Sigmoid colon (tissue), 7 donors: ENCODE measurements at regions of chr2 and their contacts with region 1.

Region 1: GRCh38 chr2:5691975-5692529 is at the start of gene SOX11:
- DNase-seq: peak; percentile 91
- H3K4me3 ChIP-seq: peak within 1 kb of the TSS; percentile 27 to 52 (median 48)
- H3K27ac ChIP-seq: peak within 1 kb of the TSS; percentile 20 to 84 (median 78)
- H3K4me1 ChIP-seq: peaks cover 0 to 51% (median 35%) of the 10 kb centered on the region in 4 donors
- H3K27me3 ChIP-seq: peaks cover 28 to 82% (median 51%) of the 10 kb centered on the region in 3 donors
- CTCF ChIP-seq: no peak
- EP300 ChIP-seq: no peak
- POLR2A ChIP-seq: no peak
- total RNA-seq, gene SOX11: 2.6 to 3.6 (median 2.9) TPM

Region 2: GRCh38 chr2:5433855-5434254 is 258.2 kb before region 1 on chr2:
- intact Hi-C with region 1: no loop called
- DNase-seq: no peak
- H3K4me3 ChIP-seq: no peak overlapping the region
- H3K27ac ChIP-seq: no peak overlapping the region
- H3K4me1 ChIP-seq: no peaks in the 10 kb centered on the region
- H3K27me3 ChIP-seq: no peaks in the 10 kb centered on the region
- CTCF ChIP-seq: no peak
- EP300 ChIP-seq: no peak
- POLR2A ChIP-seq: no peak

Region 3: DNA sequence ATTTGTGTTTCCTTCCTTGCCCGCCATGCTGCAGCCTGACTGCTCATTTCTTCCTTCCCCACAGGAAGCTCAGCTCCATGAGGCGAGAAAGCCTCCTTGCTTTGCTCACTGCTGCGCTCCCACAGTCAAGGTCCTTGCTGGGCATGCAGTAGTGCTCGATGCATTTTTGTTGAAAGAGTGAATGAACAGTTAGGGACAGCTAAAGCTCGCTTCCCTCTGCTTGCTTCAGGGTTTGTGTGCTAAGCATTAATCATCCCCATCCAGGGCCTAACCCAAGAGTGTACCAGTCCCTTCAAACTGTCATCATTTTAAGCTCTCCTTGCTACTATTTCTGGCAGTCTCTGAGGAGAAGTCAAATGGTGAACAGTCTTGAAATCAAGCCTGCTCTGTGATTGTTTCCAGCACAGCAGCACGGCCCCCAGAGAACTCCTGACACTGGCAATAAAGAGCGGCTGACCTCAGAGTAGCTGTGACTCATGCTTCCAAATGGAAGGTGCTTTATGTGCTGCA is 171.5 kb before region 1 on chr2:
- intact Hi-C with region 1: loop called (anchors 5 kb)
- DNase-seq: peak; percentile 75
- H3K4me3 ChIP-seq: no peak overlapping the region
- H3K27ac ChIP-seq: peak overlapping the region in 3 of 4 donors; percentile 35 to 73 (median 68)
- H3K4me1 ChIP-seq: peaks cover 0 to 27% (median 18%) of the 10 kb centered on the region in 4 donors
- H3K27me3 ChIP-seq: no peaks in the 10 kb centered on the region
- CTCF ChIP-seq: no peak
- EP300 ChIP-seq: peak in 3 of 4 donors; percentile 26 to 65 (median 48)
- POLR2A ChIP-seq: no peak

Region 4: GRCh38 chr2:5539282-5540165 is 152.5 kb before region 1 on chr2:
- intact Hi-C with region 1: loop called (anchors 5 kb)
- DNase-seq: no peak
- H3K4me3 ChIP-seq: no peak overlapping the region
- H3K27ac ChIP-seq: peak overlapping the region in 3 of 4 donors; percentile 62 to 77 (median 72)
- H3K4me1 ChIP-seq: peaks cover 0 to 35% (median 5%) of the 10 kb centered on the region in 4 donors
- H3K27me3 ChIP-seq: no peaks in the 10 kb centered on the region
- CTCF ChIP-seq: no peak
- EP300 ChIP-seq: no peak
- POLR2A ChIP-seq: no peak

Region 5: GRCh38 chr2:5845804-5846330 is 153.8 kb after region 1 on chr2:
- intact Hi-C with region 1: no loop called
- DNase-seq: no peak
- H3K4me3 ChIP-seq: no peak overlapping the region
- H3K27ac ChIP-seq: no peak overlapping the region
- H3K4me1 ChIP-seq: no peaks in the 10 kb centered on the region
- H3K27me3 ChIP-seq: no peaks in the 10 kb centered on the region
- CTCF ChIP-seq: no peak
- EP300 ChIP-seq: no peak
- POLR2A ChIP-seq: no peak